Caco-2 (cell line): ENCODE measurements at regions of chr15 and their contacts with region 1.

Region 1: DNA sequence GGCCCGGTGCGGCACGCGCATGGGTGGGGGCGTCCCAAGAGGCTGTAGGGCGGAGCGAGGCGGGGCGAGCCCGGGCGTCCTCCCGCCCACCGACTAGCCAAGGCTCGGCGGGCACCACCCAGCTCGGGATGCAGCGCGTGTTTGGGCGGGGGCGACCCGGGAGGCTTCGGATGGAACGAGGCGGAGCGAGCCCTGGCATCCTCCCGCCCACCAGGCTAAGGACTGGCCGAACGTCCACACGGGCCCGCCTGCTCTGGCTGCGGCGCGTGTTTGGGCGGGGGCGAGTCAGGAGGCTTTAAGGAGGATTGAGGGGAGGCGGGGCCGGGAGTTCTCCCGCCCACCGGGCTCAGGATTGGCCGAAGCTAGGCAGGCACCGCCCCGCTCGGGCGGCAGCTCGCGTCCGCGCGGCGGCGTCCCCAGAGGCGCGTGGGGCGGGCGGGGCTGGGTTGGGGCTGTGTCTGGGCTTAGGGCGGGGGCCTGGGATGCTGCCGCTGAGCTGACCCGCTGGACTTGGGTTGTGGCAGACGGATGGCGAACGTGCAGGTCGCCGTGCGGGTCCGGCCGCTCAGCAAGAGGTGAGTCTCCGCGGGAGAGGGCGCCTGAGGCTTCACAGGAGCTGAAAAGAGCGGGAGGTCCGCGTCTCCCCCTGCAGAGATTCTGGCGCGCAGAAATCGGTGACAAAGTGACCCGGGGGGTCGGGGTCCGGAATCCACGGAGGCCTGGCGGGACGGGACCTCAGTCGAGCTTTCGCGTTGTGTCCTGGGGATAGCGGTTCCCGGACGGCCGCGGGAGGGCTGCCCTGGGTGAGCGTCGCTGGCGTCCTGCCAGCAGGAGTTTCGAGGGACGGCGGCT is at the start of gene STARD9:
- DNase-seq: peak; percentile 98
- H3K4me3 ChIP-seq: peak within 1 kb of the TSS; percentile 58
- H3K4me3 Mint-ChIP-seq: peak within 1 kb of the TSS; percentile 86
- H3K27ac Mint-ChIP-seq: peak within 1 kb of the TSS; percentile 37
- H3K4me1 ChIP-seq: 0 out of 2 replicates have a peak, but pooled peaks cover 10% of the 10 kb centered on the region
- H3K4me1 Mint-ChIP-seq: no peaks in the 10 kb centered on the region
- H3K27me3 ChIP-seq: peaks cover 1% of the 10 kb centered on the region; the same call in 1 of the 2 replicates
- H3K27me3 Mint-ChIP-seq: peaks cover 20% of the 10 kb centered on the region
- CTCF ChIP-seq: no peak
- total RNA-seq, gene STARD9: 0.56 and 0.86 TPM in 2 replicates

Region 2: GRCh38 chr15:42533246-42533645 is 42.2 kb before region 1 on chr15:
- CTCF ChIA-PET with region 1: interaction called, 3 read pairs
- POLR2A ChIA-PET with region 1: interaction called, 11 read pairs
- intact Hi-C with region 1: no loop called
- DNase-seq: no peak
- H3K4me3 ChIP-seq: no peak overlapping the region
- H3K4me3 Mint-ChIP-seq: no peak overlapping the region
- H3K27ac Mint-ChIP-seq: no peak overlapping the region
- H3K4me1 ChIP-seq: no peaks in the 10 kb centered on the region
- H3K4me1 Mint-ChIP-seq: no peaks in the 10 kb centered on the region
- H3K27me3 ChIP-seq: no peaks in the 10 kb centered on the region
- H3K27me3 Mint-ChIP-seq: no peaks in the 10 kb centered on the region
- CTCF ChIP-seq: no peak

Region 3: GRCh38 chr15:42608110-42608531 is 32.7 kb after region 1 on chr15:
- CTCF ChIA-PET with region 1: no interaction called
- POLR2A ChIA-PET with region 1: no interaction called
- intact Hi-C with region 1: no loop called
- DNase-seq: no peak
- H3K4me3 ChIP-seq: no peak overlapping the region
- H3K4me3 Mint-ChIP-seq: no peak overlapping the region
- H3K27ac Mint-ChIP-seq: no peak overlapping the region
- H3K4me1 ChIP-seq: no peaks in the 10 kb centered on the region
- H3K4me1 Mint-ChIP-seq: no peaks in the 10 kb centered on the region
- H3K27me3 ChIP-seq: no peaks in the 10 kb centered on the region; the same call in 1 of the 2 replicates
- H3K27me3 Mint-ChIP-seq: peaks cover 3% of the 10 kb centered on the region
- CTCF ChIP-seq: no peak